HCT116 (cell line): ENCODE measurements at regions of chr1 and their contacts with region 1.

Region 1: GRCh38 chr1:26999440-26999987 is 6.0 kb downstream of the TRNP1 start:
- DNase-seq: peak; percentile 83
- ATAC-seq: peak; percentile 52
- H3K4me3 ChIP-seq: peak overlapping the region in 1 of 2 experiments; percentile 28; a peak in 1 of 4 replicates
- H3K27ac ChIP-seq: peak overlapping the region; percentile 85
- H3K4me1 ChIP-seq: peaks cover 82 to 97% of the 10 kb centered on the region in 2 experiments
- H3K27me3 ChIP-seq: no peaks in the 10 kb centered on the region
- CTCF ChIP-seq: no peak
- POLR2A ChIP-seq: no peak
- RAD21 ChIP-seq: no peak

Region 2: DNA sequence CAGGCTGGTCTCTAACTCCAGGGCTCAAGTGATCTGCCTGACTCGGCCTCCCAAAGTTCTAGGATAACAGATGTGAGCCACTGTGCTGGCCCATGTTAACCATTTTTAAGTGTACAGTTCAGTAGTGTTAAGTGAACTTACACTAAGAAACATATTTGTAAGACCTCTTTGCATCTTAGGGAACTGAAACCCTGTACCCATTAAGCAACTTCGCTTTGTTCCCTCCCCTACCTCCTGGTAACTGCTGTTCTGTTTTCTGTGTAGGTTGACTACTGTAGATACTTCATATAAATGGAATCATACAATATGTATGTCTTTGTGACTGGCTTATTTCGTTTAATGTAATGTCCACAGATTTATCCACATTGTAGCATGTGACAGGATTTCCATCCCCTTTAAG is 67.0 kb before region 1 on chr1:
- CTCF ChIA-PET with region 1: no interaction called
- POLR2A ChIA-PET with region 1: no interaction called
- RAD21 ChIA-PET with region 1: no interaction called
- intact Hi-C with region 1: no loop called
- DNase-seq: no peak
- ATAC-seq: no peak
- H3K4me3 ChIP-seq: no peak overlapping the region
- H3K27ac ChIP-seq: no peak overlapping the region
- H3K4me1 ChIP-seq: no peaks in the 10 kb centered on the region
- H3K27me3 ChIP-seq: no peaks in the 10 kb centered on the region
- CTCF ChIP-seq: no peak
- POLR2A ChIP-seq: no peak
- RAD21 ChIP-seq: no peak

Region 3: GRCh38 chr1:26965213-26965612 is 34.3 kb before region 1 on chr1:
- CTCF ChIA-PET with region 1: interaction called, 42 read pairs
- POLR2A ChIA-PET with region 1: interaction called, 26 read pairs
- RAD21 ChIA-PET with region 1: interaction called, 3 to 7 read pairs
- intact Hi-C with region 1: loop called (anchors 1 kb)
- DNase-seq: no peak
- ATAC-seq: no peak
- H3K4me3 ChIP-seq: no peak overlapping the region
- H3K27ac ChIP-seq: no peak overlapping the region
- H3K4me1 ChIP-seq: peaks cover 0 to 41% of the 10 kb centered on the region in 2 experiments; a peak in 2 of 4 replicates
- H3K27me3 ChIP-seq: no peaks in the 10 kb centered on the region
- CTCF ChIP-seq: no peak
- POLR2A ChIP-seq: no peak
- RAD21 ChIP-seq: no peak

Region 4: DNA sequence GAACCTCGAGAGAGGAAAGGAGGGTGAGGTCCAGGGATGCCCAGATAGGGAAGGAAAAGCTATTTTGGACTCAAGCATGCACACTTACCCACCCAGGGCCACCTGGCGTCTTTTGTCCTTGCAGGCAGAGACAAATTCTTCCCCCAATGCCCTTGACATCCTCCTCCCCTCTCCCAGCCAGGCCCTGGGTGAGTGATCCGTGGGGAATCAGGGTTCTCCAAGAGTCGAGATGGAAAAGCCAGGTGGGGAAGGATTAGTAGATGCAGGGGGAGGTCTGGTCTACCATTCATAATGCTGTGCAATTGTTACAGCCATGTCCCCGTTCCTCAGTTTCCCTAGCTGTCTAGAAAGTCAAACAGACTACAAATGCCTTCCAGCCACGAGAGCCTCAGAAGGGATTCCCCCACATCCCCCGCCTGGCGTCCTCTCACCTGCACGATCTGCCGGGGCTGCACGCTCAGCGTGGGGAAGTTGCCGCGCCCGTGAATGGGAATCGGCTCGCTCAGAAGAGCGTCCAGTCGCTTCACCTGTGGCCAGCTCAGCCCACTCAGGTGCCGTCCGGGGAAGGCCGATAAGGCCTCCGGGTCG is 12.6 kb after region 1 on chr1:
- CTCF ChIA-PET with region 1: interaction called, 7 read pairs
- POLR2A ChIA-PET with region 1: interaction called, 24 read pairs
- RAD21 ChIA-PET with region 1: no interaction called
- intact Hi-C with region 1: no loop called
- DNase-seq: no peak
- ATAC-seq: no peak; the same call in 1 of the 2 replicates
- H3K4me3 ChIP-seq: peak overlapping the region; percentile 49 to 60
- H3K27ac ChIP-seq: peak overlapping the region; percentile 43
- H3K4me1 ChIP-seq: peaks cover 55 to 65% of the 10 kb centered on the region in 2 experiments
- H3K27me3 ChIP-seq: no peaks in the 10 kb centered on the region
- CTCF ChIP-seq: no peak
- POLR2A ChIP-seq: no peak
- RAD21 ChIP-seq: no peak

Region 5: GRCh38 chr1:27031235-27032118 is 32.0 kb after region 1 on chr1:
- CTCF ChIA-PET with region 1: interaction called, 3 read pairs
- POLR2A ChIA-PET with region 1: interaction called, 4 read pairs
- RAD21 ChIA-PET with region 1: no interaction called
- intact Hi-C with region 1: loop called (anchors 2 kb)
- DNase-seq: peak; percentile 67
- ATAC-seq: peak; percentile 79
- H3K4me3 ChIP-seq: peak overlapping the region; percentile 37 to 54
- H3K27ac ChIP-seq: peak overlapping the region; percentile 86
- H3K4me1 ChIP-seq: peaks cover 35 to 46% of the 10 kb centered on the region in 2 experiments
- H3K27me3 ChIP-seq: no peaks in the 10 kb centered on the region
- CTCF ChIP-seq: no peak
- POLR2A ChIP-seq: no peak
- RAD21 ChIP-seq: no peak; the same call in 1 of the 2 replicates

Region 6: GRCh38 chr1:27097484-27097917 is 98.0 kb after region 1 on chr1:
- CTCF ChIA-PET with region 1: interaction called, 18 read pairs
- POLR2A ChIA-PET with region 1: no interaction called
- RAD21 ChIA-PET with region 1: interaction called, 5 read pairs
- intact Hi-C with region 1: loop called (anchors 1 kb)
- DNase-seq: peak; percentile 45
- ATAC-seq: peak; percentile 87
- H3K4me3 ChIP-seq: no peak overlapping the region
- H3K27ac ChIP-seq: no peak overlapping the region
- H3K4me1 ChIP-seq: peaks cover 9 to 29% of the 10 kb centered on the region in 2 experiments
- H3K27me3 ChIP-seq: no peaks in the 10 kb centered on the region
- CTCF ChIP-seq: peak; percentile 95 to 97 (median 96)
- POLR2A ChIP-seq: no peak
- RAD21 ChIP-seq: peak; percentile 96